GM13976 (cell line): ENCODE measurements at regions of chr22 and their contacts with region 1.

Region 1: GRCh38 chr22:35921777-35922176 is 106.8 kb downstream of the RBFOX2 start:
- DNase-seq: peak; percentile 34
- CTCF ChIP-seq: peak; percentile 48

Region 2: GRCh38 chr22:35631597-35631996 is 290.2 kb before region 1 on chr22:
- in situ Hi-C with region 1: loop called (anchors 10 kb)
- DNase-seq: peak; percentile 58
- CTCF ChIP-seq: peak; percentile 49

Region 3: GRCh38 chr22:35785181-35785923 is 136.4 kb before region 1 on chr22:
- in situ Hi-C with region 1: no loop called
- DNase-seq: no peak
- CTCF ChIP-seq: no peak

Region 4: DNA sequence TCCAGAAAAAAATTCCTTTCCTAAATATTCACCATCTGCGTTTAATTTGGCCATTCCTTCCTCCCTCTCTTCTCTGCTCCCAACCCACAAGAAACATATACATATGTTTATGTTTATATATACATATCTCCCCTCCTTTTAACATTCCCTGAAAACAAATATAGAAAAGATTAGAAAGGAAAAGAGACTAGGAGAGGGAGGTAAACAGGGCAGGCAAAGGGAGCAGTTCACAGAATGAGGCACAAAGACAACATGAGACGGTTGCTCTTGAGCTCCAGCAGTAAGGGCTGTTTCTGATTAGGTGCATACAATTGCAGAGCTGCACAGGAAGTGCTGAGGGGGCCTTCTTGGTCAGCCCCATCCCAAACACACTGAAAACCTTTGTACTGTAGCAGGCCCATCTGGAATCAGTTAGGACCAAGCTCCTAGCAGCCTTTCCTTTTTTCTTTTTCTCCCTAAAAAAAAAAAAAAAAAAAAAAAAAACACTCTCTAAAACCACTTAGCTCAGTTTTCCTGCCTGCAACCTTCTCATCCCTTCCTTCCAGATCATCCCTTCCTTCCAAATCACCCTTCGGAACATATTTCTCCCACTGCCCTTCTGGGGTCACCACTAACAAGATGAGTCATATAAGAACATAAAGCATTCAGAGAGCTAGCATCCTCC is 49.8 kb after region 1 on chr22:
- in situ Hi-C with region 1: no loop called
- DNase-seq: no peak
- CTCF ChIP-seq: no peak